ENCODE measurements at regions of chr16 and their contacts with region 1.

Region 1: GRCh38 chr16:24504472-24505345 is 34.7 kb upstream of the RBBP6 start:
- DNase-seq: peak; percentile 19 to 59 (median 40)
- H3K4me3 ChIP-seq: no peak overlapping the region
- H3K4me3 Mint-ChIP-seq: no peak overlapping the region
- H3K27ac ChIP-seq: no peak overlapping the region
- H3K27ac Mint-ChIP-seq: no peak overlapping the region
- H3K4me1 ChIP-seq: no peaks in the 10 kb centered on the region
- H3K4me1 Mint-ChIP-seq: no peaks in the 10 kb centered on the region
- H3K27me3 ChIP-seq: no peaks in the 10 kb centered on the region
- H3K27me3 Mint-ChIP-seq: peaks cover 12 to 33% of the 10 kb centered on the region in 2 donors

Region 2: DNA sequence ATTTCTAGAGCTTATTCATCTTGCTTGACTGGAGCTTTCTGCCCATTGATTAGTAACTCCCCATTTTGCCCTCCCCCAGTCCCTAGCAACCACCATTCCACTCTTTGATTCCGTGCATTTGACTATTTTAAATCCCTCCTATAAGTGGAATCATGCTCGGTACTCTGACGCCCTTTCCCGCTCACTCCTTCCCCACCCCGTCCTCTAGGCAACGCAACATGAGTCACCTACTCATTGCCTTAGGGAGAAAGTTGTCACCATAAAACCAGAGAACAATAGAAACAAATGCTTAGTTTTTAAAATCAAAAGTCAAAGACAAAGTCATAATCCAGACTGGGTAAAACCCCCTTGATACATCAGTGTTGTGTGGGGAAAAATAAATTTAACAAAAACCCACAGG is 10.8 kb before region 1 on chr16:
- CTCF ChIA-PET with region 1: interaction called, 13 read pairs
- POLR2A ChIA-PET with region 1: no interaction called
- DNase-seq: no peak
- H3K4me3 ChIP-seq: no peak overlapping the region
- H3K4me3 Mint-ChIP-seq: no peak overlapping the region
- H3K27ac ChIP-seq: no peak overlapping the region
- H3K27ac Mint-ChIP-seq: no peak overlapping the region
- H3K4me1 ChIP-seq: no peaks in the 10 kb centered on the region
- H3K4me1 Mint-ChIP-seq: no peaks in the 10 kb centered on the region
- H3K27me3 ChIP-seq: no peaks in the 10 kb centered on the region
- H3K27me3 Mint-ChIP-seq: peaks cover 13 to 23% of the 10 kb centered on the region in 2 donors

Region 3: DNA sequence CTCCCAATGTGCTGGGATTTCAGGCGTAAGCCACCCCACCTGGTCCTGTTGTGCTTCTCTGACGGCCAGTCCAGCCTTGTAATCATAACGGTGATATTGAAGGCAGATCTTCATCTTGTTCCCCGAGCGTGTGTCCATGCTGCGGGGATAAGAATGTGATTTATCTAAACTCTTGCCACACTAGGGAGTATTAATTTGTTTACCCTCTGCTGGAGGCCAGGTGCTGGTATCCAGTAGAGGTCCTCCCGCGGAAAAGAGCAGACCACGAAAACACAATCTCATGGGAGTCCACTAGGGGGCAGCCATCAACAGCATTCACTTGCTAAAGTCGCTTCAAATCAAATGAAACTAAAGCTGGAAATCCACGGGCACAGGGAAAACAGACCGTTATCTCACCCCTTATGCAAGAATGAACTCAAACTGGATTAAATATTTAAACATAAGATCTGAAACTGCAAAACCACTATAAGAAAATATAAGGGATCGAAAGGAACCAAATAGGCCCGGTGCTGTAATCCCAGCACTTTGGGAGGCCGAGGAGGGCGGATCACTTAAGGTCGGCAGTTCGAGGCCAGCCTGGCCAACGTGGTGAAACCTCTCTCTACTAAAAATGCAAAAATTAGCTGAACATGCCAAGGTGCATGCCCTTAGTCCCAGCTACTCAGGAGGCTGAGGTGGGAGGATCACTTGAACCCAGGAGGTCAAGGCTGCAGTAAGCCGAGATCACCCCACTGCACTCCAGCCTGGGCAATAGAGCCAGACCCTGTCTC is 12.4 kb after region 1 on chr16:
- CTCF ChIA-PET with region 1: interaction called, 14 read pairs
- POLR2A ChIA-PET with region 1: no interaction called
- DNase-seq: peak; percentile 53 to 79 (median 59)
- H3K4me3 ChIP-seq: no peak overlapping the region
- H3K4me3 Mint-ChIP-seq: peak overlapping the region in 5 of 7 donors; percentile 40 to 55 (median 48)
- H3K27ac ChIP-seq: no peak overlapping the region
- H3K27ac Mint-ChIP-seq: peak overlapping the region in 2 of 8 donors; percentile 19 to 87
- H3K4me1 ChIP-seq: peaks cover 4% of the 10 kb centered on the region
- H3K4me1 Mint-ChIP-seq: peaks cover 5 to 7% (median 6%) of the 10 kb centered on the region in 3 donors
- H3K27me3 ChIP-seq: no peaks in the 10 kb centered on the region
- H3K27me3 Mint-ChIP-seq: peaks cover 5 to 8% of the 10 kb centered on the region in 2 donors

Region 4: DNA sequence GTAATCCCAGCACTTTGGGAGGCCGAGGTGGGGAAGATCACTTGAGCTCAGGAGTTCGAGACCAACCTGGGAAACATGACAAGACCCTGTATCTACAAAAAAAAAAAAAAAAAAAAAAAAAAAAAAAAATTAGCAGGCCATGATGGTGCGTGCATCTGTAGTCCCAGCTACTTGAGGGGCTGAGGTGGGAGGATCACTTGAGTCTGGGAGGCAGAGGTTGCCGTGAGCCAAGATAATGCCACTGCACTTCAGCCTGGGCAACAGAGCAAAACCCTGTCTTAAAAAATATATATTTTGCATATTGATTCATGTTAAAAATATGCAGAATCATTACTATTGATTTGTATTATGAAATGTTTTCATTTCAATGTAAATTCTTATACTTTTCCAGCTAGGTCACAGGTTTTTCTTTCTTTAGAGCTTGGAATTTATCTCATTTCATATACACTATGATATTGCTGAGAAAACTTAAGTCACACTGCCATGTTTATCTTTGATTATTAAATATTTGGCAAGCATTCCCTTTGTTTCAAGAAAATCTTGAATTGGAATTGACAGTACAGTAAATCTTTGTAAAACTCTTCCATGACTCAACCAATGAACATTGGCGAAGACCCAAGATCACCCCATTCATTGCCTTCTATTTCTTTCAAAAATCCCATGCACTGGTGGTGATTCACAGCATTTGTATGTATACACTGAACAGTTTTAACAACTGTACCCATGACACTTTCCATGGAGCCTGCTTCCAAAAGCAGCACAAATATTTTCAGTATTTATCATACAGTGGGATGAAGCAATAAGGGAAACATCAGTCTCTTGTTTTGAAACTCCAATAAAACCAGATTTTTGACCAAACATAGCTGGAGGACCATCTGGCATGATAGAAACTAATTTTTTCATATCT is 141.3 kb after region 1 on chr16:
- CTCF ChIA-PET with region 1: no interaction called
- POLR2A ChIA-PET with region 1: no interaction called
- DNase-seq: no peak
- H3K4me3 ChIP-seq: no peak overlapping the region
- H3K4me3 Mint-ChIP-seq: no peak overlapping the region
- H3K27ac ChIP-seq: no peak overlapping the region
- H3K27ac Mint-ChIP-seq: no peak overlapping the region
- H3K4me1 ChIP-seq: no peaks in the 10 kb centered on the region
- H3K4me1 Mint-ChIP-seq: no peaks in the 10 kb centered on the region
- H3K27me3 ChIP-seq: no peaks in the 10 kb centered on the region
- H3K27me3 Mint-ChIP-seq: peaks cover 21 to 34% of the 10 kb centered on the region in 2 donors